Mammary epithelial cell (primary cell): ENCODE measurements at regions of chr10 and their contacts with region 1.

Region 1: DNA sequence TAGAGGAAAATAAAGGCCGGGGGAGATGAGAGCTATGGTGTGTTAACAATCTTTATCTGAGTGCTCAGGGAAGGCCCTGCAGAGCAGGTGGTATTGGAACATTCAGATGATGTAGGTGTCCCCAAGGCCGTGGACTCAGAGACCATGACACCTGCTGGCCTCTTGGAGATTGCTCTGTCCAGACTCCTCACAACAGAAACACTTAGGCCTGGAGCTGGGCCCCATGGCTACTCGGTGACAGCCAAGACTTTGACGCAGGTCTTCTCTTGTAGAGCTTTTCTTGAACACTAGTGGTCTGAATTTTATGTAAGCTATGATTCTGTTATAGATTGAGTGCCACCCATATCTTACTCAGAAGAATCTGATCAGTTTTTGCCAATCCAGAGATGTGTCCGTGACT is 13.4 kb downstream of the AKR1E2 start:
- DNase-seq: no peak
- H3K4me3 ChIP-seq: no peak overlapping the region
- H3K27ac ChIP-seq: no peak overlapping the region
- H3K4me1 ChIP-seq: no peaks in the 10 kb centered on the region
- H3K27me3 ChIP-seq: no peaks in the 10 kb centered on the region
- CTCF ChIP-seq: no peak

Region 2: DNA sequence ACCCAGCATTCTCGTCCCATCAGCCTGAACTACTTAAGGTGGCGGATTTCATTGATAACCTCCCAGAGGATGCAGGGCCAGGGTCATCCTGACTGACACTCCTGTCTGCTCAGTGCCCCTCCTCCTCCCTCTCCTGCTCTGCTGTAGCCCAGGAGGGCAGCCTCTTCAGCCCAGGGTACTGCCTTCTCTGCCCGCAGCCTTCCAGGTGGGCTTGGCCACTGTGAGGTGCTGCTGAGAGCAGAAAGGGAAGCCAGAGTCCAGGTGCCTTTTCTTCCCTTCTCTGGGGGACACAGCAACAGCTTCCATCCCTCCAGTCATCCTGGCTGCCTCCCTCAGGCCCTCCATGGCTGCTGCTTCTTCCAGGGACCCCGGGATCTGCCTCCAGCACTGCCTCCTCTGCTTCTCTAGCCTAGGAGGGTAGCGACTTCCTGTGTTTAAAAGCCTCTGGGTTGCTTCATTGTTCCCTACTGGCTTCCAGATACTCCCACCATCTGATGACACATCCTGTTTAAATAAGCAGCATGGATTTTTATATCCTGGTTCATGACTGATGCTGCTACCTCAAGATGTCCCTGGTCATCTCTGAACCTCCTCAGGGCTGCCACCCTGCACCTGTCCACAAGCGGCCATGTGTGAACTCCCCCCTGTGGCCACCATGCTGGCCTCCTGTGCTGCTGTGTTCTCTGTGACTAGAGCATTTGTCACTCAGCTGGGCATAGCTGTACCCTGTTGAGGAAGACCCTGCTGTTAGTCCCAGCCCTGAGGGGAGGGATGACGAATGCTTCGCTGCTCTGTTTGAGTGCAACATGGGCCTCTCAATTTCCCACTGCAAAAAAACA is 413.0 kb after region 1 on chr10:
- CTCF ChIA-PET with region 1: no interaction called
- dilution Hi-C with region 1: loop called (anchors 10 kb)
- in situ Hi-C with region 1: no loop called
- intact Hi-C with region 1: no loop called
- DNase-seq: no peak
- H3K4me3 ChIP-seq: no peak overlapping the region
- H3K27ac ChIP-seq: no peak overlapping the region
- H3K4me1 ChIP-seq: no peaks in the 10 kb centered on the region
- H3K27me3 ChIP-seq: no peaks in the 10 kb centered on the region
- CTCF ChIP-seq: no peak